GM10248 (cell line): ENCODE measurements at regions of chr21 and their contacts with region 1.

Region 1: DNA sequence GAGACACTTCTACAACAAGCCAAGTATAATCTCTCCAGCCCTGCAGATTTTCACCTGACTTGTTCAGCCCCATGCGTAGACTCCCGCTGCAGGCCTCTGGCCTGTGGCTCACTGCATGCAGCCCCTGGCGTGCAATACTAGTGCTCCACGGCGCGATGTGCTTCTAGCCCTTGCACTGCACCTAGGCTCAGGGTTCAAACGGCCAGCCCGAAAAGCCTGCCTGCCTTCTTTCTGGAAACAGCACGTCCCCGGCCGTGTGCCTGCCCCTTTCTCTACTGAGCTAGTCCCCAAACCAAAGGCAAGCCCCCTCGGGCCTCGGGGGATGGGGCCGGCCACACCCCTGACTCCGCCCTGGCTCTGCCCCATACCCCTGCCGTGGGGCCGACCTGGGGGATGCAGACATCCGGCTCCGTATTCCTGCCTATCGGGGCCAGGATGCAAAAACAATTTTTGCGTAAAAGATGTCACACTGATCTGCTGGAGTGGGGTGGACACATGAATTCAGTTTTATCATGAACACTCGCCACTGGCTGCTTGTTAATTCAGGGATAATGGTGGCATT is 26.3 kb upstream of the TRAPPC10 start:
- DNase-seq: no peak
- CTCF ChIP-seq: no peak

Region 2: GRCh38 chr21:43975495-43975993 is 10.2 kb before region 1 on chr21:
- CTCF ChIA-PET with region 1: interaction called, 19 read pairs
- POLR2A ChIA-PET with region 1: no interaction called
- DNase-seq: peak; percentile 89
- CTCF ChIP-seq: peak; percentile 96